Psoas muscle (tissue), 8 donors: ENCODE measurements at regions of chr12 and their contacts with region 1.

Region 1: DNA sequence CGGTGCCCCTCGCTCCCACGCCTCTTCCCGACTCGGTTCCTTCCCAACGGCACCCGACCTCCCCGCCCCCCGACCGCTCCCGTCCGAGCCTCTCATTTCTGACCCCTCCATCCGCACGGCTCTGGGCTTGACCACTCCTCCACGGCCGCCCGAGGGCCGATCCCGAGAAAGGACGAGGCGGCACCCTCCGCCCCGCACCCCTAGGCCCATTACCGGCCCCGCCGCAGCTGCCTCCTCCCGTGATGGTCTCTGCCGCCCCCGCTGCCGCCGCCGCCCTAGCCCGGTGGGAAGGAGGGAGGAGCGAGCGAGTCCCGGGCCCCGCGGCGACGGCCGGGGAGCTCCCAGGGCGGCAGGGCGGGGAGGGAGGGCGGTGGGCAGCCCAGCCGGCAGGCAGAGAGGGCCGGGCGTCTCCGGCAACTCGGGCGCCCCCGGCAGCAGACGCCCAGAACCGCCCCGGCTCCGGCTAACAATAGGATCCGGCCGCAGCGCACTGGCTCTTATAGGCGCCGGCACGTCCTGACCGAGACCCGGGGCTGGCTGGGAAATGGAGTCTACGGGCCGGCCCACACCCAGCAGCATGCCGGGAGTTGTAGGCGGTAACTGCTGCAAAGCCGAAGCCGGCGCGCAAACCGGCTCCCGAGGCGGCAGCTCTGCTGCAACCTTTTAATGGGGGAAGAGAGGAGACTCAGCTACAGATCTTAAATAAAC is at the start of gene CSRNP2:
- DNase-seq: peak; percentile 97 to 98
- ATAC-seq: peak; percentile 98 to 99 (median 98)
- H3K4me3 ChIP-seq: peak within 1 kb of the TSS; percentile 89
- H3K27ac ChIP-seq: peak within 1 kb of the TSS; percentile 91
- H3K4me1 ChIP-seq: peaks cover 7% of the 10 kb centered on the region
- H3K27me3 ChIP-seq: no peaks in the 10 kb centered on the region
- CTCF ChIP-seq: peak; percentile 24
- total RNA-seq, gene CSRNP2: 17.8 to 26.6 (median 18.5) TPM

Region 2: DNA sequence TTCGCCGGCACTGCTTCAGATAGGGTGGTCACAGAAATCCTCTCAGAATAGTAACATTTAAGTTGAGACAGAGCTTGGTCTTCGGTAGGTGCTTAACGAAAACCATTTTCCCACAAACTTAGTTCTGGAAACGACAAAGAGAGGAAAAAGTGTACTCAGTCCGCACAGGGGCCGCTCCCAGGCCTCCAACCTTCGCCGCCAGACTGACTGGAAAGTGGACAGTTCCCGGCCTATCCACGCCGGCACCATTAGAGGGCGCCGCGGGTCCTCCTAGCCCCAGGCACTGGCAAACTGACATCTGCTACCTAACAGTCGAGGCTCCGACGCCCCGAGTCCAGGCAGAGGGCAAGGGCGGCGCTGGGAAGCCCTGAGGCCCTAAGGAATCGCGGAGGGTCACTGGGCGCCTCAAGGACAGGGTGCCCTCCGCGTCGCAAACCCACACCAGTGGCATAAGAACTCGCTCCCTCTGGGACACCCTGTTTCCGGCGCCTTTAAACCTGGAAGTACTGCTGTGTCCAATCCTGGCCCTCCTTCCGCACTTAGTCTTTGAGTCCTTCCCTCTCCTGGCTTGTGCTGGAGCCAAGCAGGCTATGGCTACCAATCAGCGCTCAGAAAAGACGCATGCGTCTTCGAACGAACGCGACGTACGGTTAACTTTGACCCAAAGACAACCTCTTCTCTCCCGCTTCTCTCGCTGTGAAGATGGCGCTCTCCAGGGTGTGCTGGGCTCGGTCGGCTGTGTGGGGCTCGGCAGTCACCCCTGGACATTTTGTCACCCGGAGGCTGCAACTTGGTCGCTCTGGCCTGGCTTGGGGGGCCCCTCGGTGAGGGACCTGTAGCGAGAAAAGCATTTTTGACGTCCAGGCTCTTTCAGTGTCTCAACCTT is 35.4 kb before region 1 on chr12 and contains the start of gene LETMD1:
- intact Hi-C with region 1: loop called in 1 of 2 experiments (anchors 1 kb)
- DNase-seq: peak; percentile 91 to 96
- ATAC-seq: peak; percentile 97 to 99 (median 98)
- H3K4me3 ChIP-seq: peak within 1 kb of the TSS; percentile 79
- H3K27ac ChIP-seq: peak within 1 kb of the TSS; percentile 97
- H3K4me1 ChIP-seq: peaks cover 20% of the 10 kb centered on the region
- H3K27me3 ChIP-seq: no peaks in the 10 kb centered on the region
- CTCF ChIP-seq: peak; percentile 90
- total RNA-seq, gene LETMD1: 22.2 to 29.5 (median 28.3) TPM

Region 3: GRCh38 chr12:51238510-51239334 is 155.4 kb after region 1 on chr12 and contains the start of gene DAZAP2:
- intact Hi-C with region 1: loop called in 1 of 2 experiments (anchors 2 kb)
- DNase-seq: peak; percentile 95 to 98
- ATAC-seq: peak; percentile 98 to 99 (median 98)
- H3K4me3 ChIP-seq: peak within 1 kb of the TSS; percentile 100
- H3K27ac ChIP-seq: peak within 1 kb of the TSS; percentile 100
- H3K4me1 ChIP-seq: peaks cover 27% of the 10 kb centered on the region
- H3K27me3 ChIP-seq: no peaks in the 10 kb centered on the region
- CTCF ChIP-seq: peak; percentile 28
- total RNA-seq, gene DAZAP2: 62.4 to 157 (median 105) TPM